CD8-positive, alpha-beta memory T cell (primary cell): ENCODE measurements at regions of chr7 and their contacts with region 1.

Region 1: DNA sequence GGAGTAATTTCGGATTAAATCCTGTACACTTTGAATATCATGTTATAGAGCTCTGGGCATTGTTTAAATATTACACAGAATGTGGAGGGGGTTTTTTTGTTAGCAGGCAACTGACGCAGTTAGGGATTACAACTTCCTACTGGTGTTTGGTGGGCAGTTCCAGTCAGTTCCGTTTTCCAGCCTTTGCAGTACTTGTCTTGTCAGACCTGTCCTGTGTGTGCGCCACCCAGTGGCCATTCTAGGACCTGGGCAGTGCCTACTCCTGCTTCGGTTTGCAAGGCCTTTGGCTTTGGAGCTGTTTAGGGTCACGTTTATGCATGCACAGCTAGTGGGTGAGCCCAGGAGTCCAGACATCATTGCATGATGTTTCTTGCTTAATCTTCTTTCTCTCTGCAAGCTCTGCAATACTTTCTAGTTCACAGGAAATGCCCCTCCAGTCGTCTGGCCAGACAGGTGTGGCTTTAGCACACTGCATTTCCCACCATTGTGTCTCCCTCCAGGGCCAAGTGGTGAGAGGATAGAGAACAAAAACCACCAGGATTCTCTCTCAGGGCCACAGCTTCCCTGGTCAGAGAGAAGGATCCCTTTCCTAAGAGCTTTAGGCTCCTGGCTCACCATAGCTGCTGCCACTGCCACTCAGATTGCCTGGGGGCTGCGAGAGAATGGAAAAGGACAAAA is 96.5 kb upstream of the TARP start:
- DNase-seq: peak; percentile 67 to 88 (median 75)
- H3K4me3 ChIP-seq: no peak overlapping the region
- H3K4me3 Mint-ChIP-seq: peak overlapping the region; percentile 66 to 87 (median 73)
- H3K27ac ChIP-seq: no peak overlapping the region
- H3K27ac Mint-ChIP-seq: peak overlapping the region; percentile 79 to 98 (median 95)
- H3K4me1 ChIP-seq: peaks cover 62% of the 10 kb centered on the region
- H3K4me1 Mint-ChIP-seq: peaks cover 74 to 90% (median 86%) of the 10 kb centered on the region in 3 donors
- H3K27me3 ChIP-seq: no peaks in the 10 kb centered on the region
- H3K27me3 Mint-ChIP-seq: peaks cover 0 to 1% of the 10 kb centered on the region in 2 donors

Region 2: DNA sequence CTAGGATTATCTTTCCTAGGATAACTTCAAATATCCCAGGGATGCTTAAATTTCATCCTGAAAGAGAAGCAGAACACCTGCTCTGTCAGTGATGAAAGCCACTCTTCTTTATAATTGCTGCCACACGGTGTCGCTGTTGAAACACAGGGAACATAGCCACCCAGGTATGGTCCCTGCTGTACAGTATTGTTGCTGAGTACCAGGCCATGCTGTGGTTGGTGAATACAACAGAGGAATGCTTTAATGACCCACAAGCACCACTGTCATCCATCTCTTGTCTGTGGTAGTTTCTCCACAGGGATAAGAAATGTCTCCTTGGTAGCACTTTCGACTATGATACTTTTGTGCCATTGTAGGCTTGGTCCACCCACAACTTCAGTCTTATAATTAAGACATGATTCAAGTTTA is 262.5 kb before region 1 on chr7:
- CTCF ChIA-PET with region 1: interaction called, 114 read pairs
- POLR2A ChIA-PET with region 1: no interaction called
- DNase-seq: peak; percentile 39 to 77 (median 50)
- H3K4me3 ChIP-seq: no peak overlapping the region
- H3K4me3 Mint-ChIP-seq: no peak overlapping the region
- H3K27ac ChIP-seq: no peak overlapping the region
- H3K27ac Mint-ChIP-seq: no peak overlapping the region
- H3K4me1 ChIP-seq: no peaks in the 10 kb centered on the region
- H3K4me1 Mint-ChIP-seq: peaks cover 0 to 5% (median 4%) of the 10 kb centered on the region in 3 donors
- H3K27me3 ChIP-seq: peaks cover 4% of the 10 kb centered on the region
- H3K27me3 Mint-ChIP-seq: peaks cover 9 to 37% of the 10 kb centered on the region in 2 donors

Region 3: GRCh38 chr7:38206071-38206470 is 163.9 kb before region 1 on chr7:
- CTCF ChIA-PET with region 1: interaction called, 18 read pairs
- POLR2A ChIA-PET with region 1: no interaction called
- DNase-seq: no peak
- H3K4me3 ChIP-seq: no peak overlapping the region
- H3K4me3 Mint-ChIP-seq: no peak overlapping the region
- H3K27ac ChIP-seq: no peak overlapping the region
- H3K27ac Mint-ChIP-seq: peak overlapping the region in 3 of 8 donors; percentile 47 to 61 (median 56)
- H3K4me1 ChIP-seq: no peaks in the 10 kb centered on the region
- H3K4me1 Mint-ChIP-seq: peaks cover 0 to 14% (median 7%) of the 10 kb centered on the region in 3 donors
- H3K27me3 ChIP-seq: no peaks in the 10 kb centered on the region
- H3K27me3 Mint-ChIP-seq: peaks cover 0 to 1% of the 10 kb centered on the region in 2 donors

Region 4: GRCh38 chr7:38232502-38233366 is 137.2 kb before region 1 on chr7:
- CTCF ChIA-PET with region 1: interaction called, 26 read pairs
- POLR2A ChIA-PET with region 1: no interaction called
- DNase-seq: peak; percentile 58 to 95 (median 66)
- H3K4me3 ChIP-seq: peak overlapping the region; percentile 27
- H3K4me3 Mint-ChIP-seq: peak overlapping the region; percentile 40 to 83 (median 77)
- H3K27ac ChIP-seq: peak overlapping the region; percentile 40
- H3K27ac Mint-ChIP-seq: peak overlapping the region; percentile 93 to 98 (median 97)
- H3K4me1 ChIP-seq: peaks cover 72% of the 10 kb centered on the region
- H3K4me1 Mint-ChIP-seq: peaks cover 91 to 100% (median 100%) of the 10 kb centered on the region in 3 donors
- H3K27me3 ChIP-seq: no peaks in the 10 kb centered on the region
- H3K27me3 Mint-ChIP-seq: no peaks in the 10 kb centered on the region

Region 5: GRCh38 chr7:38335492-38336147 is 34.3 kb before region 1 on chr7:
- CTCF ChIA-PET with region 1: interaction called, 63 read pairs
- POLR2A ChIA-PET with region 1: no interaction called
- DNase-seq: peak; percentile 74 to 91 (median 81)
- H3K4me3 ChIP-seq: peak overlapping the region; percentile 15
- H3K4me3 Mint-ChIP-seq: peak overlapping the region; percentile 88 to 97 (median 96)
- H3K27ac ChIP-seq: peak overlapping the region; percentile 80
- H3K27ac Mint-ChIP-seq: peak overlapping the region; percentile 10 to 98 (median 94)
- H3K4me1 ChIP-seq: peaks cover 14% of the 10 kb centered on the region
- H3K4me1 Mint-ChIP-seq: peaks cover 57 to 68% (median 67%) of the 10 kb centered on the region in 3 donors
- H3K27me3 ChIP-seq: no peaks in the 10 kb centered on the region
- H3K27me3 Mint-ChIP-seq: no peaks in the 10 kb centered on the region